Activated naive CD4-positive, alpha-beta T cell treated with anti-CD3 and anti-CD28 coated beads for 36 hours (primary cell): ENCODE measurements at regions of chr7 and their contacts with region 1.

Region 1: GRCh38 chr7:111763221-111763801 is 201.0 kb upstream of the IMMP2L start:
- DNase-seq: peak; percentile 11
- H3K4me3 Mint-ChIP-seq: no peak overlapping the region
- H3K27ac Mint-ChIP-seq: no peak overlapping the region
- H3K4me1 Mint-ChIP-seq: no peaks in the 10 kb centered on the region
- H3K27me3 Mint-ChIP-seq: no peaks in the 10 kb centered on the region

Region 2: GRCh38 chr7:111855161-111855856 is 92.0 kb after region 1 on chr7:
- CTCF ChIA-PET with region 1: interaction called, 4 read pairs
- intact Hi-C with region 1: loop called (anchors 1 kb)
- DNase-seq: peak; percentile 24
- H3K4me3 Mint-ChIP-seq: no peak overlapping the region
- H3K27ac Mint-ChIP-seq: no peak overlapping the region
- H3K4me1 Mint-ChIP-seq: no peaks in the 10 kb centered on the region
- H3K27me3 Mint-ChIP-seq: peaks cover 3% of the 10 kb centered on the region

Region 3: GRCh38 chr7:112414855-112415490 is 651.7 kb after region 1 on chr7:
- CTCF ChIA-PET with region 1: no interaction called
- intact Hi-C with region 1: loop called (anchors 1 kb)
- DNase-seq: no peak
- H3K4me3 Mint-ChIP-seq: no peak overlapping the region
- H3K27ac Mint-ChIP-seq: no peak overlapping the region
- H3K4me1 Mint-ChIP-seq: no peaks in the 10 kb centered on the region
- H3K27me3 Mint-ChIP-seq: peaks cover 10% of the 10 kb centered on the region